SK-N-SH (cell line): ENCODE measurements at regions of chr15 and their contacts with region 1.

Region 1: GRCh38 chr15:37793851-37794250 is 140.6 kb upstream of the TMCO5A start:
- DNase-seq: peak; percentile 60
- H3K4me3 ChIP-seq: no peak overlapping the region
- H3K27ac ChIP-seq: peak overlapping the region in 1 of 2 experiments; percentile 99; a peak in 2 of 4 replicates
- H3K4me1 ChIP-seq: peaks cover 15 to 32% of the 10 kb centered on the region in 2 experiments; a peak in 2 of 4 replicates
- H3K27me3 ChIP-seq: no peaks in the 10 kb centered on the region
- CTCF ChIP-seq: peak; percentile 64
- EP300 ChIP-seq: no peak; a peak in 1 of 4 replicates
- RAD21 ChIP-seq: peak; percentile 93

Region 2: GRCh38 chr15:37100109-37100965 is 693.5 kb before region 1 on chr15 and contains the start of gene MEIS2:
- CTCF ChIA-PET with region 1: interaction called, 3 read pairs
- POLR2A ChIA-PET with region 1: interaction called, 11 read pairs
- DNase-seq: peak; percentile 97
- H3K4me3 ChIP-seq: peak within 1 kb of the TSS; percentile 74 to 92
- H3K27ac ChIP-seq: peak within 1 kb of the TSS; percentile 99
- H3K4me1 ChIP-seq: no peaks in the 10 kb centered on the region
- H3K27me3 ChIP-seq: no peaks in the 10 kb centered on the region
- CTCF ChIP-seq: no peak
- EP300 ChIP-seq: peak in 1 of 2 experiments; percentile 46; a peak in 2 of 4 replicates
- RAD21 ChIP-seq: no peak
- polyA plus RNA-seq, gene MEIS2: 120 and 146 TPM in 2 replicates

Region 3: DNA sequence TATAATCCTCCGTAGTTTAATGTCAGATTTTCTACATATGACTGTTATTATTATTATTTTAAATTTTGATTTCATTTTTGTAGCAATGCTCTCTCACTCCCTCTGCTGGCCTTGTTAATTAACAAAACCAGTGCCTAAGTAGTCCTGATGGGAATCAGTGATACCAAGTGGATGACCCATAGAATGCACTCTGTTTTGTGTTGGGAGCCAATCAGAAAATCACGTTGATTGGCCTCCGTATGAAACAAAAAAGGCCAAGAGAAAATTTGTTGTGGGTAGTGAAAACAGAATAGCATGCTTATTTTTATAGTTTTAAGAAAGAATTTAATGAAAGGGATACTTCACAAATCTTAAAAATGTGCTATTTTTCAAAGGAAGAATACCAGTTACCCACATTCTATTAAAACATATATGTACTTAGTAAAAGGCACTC is 659.1 kb before region 1 on chr15:
- CTCF ChIA-PET with region 1: interaction called, 37 read pairs
- POLR2A ChIA-PET with region 1: no interaction called
- DNase-seq: no peak
- H3K4me3 ChIP-seq: no peak overlapping the region
- H3K27ac ChIP-seq: peak overlapping the region in 1 of 2 experiments; percentile 97; a peak in 2 of 4 replicates
- H3K4me1 ChIP-seq: peaks cover 5 to 44% of the 10 kb centered on the region in 2 experiments; a peak in 2 of 4 replicates
- H3K27me3 ChIP-seq: no peaks in the 10 kb centered on the region
- CTCF ChIP-seq: peak; percentile 83
- EP300 ChIP-seq: 0 out of 4 replicates have a peak, but pooled peaks of 1 of the 2 experiments have one; percentile 26
- RAD21 ChIP-seq: peak; percentile 57; the same call in 1 of the 2 replicates

Region 4: DNA sequence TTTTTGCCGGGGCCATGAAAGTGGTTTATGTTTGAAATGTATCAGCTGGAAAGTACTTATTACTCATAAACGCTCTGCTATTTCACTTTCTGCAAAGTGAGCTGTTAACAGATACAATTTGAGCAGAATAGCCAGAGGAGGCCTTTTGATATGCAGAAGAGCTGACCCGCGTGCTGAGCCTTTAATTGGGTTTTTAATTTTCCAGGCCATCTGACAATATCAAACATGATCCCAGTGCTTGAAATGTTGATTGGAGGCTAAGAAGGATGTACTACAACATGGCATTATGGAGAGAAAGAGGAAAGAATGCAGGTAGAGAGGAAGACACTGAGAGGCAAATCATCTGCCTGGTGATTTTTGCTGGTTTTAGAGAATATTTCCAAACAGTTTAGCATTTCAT is 432.2 kb before region 1 on chr15:
- CTCF ChIA-PET with region 1: interaction called, 12 read pairs
- POLR2A ChIA-PET with region 1: interaction called, 5 read pairs
- DNase-seq: peak; percentile 21
- H3K4me3 ChIP-seq: no peak overlapping the region
- H3K27ac ChIP-seq: peak overlapping the region in 1 of 2 experiments; percentile 98; a peak in 2 of 4 replicates
- H3K4me1 ChIP-seq: peaks cover 0 to 21% of the 10 kb centered on the region in 2 experiments; a peak in 2 of 4 replicates
- H3K27me3 ChIP-seq: no peaks in the 10 kb centered on the region
- CTCF ChIP-seq: no peak
- EP300 ChIP-seq: peak in 1 of 2 experiments; percentile 90; a peak in 2 of 4 replicates
- RAD21 ChIP-seq: peak; percentile 48; the same call in 1 of the 2 replicates

Region 5: DNA sequence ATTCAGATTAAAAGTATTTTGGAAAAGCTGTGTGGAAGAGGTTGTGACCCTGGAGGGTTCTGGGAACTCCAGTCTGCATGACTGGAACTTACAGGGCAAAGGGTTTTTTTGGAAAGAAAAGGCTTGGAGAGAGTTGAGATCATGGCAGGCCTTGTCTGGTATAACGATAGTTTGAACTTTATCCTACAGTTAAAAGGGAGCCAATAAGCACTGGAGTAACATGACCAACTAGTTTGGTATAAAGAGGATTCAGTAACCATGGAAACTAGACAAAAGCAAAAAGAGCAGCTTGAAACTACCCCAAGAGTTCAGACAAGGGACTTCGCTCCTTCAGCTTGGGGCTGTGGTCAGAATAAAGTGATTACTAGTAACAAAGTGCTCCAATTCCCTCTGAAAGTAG is 10.6 kb before region 1 on chr15:
- CTCF ChIA-PET with region 1: interaction called, 15 read pairs
- POLR2A ChIA-PET with region 1: no interaction called
- DNase-seq: no peak
- H3K4me3 ChIP-seq: no peak overlapping the region
- H3K27ac ChIP-seq: no peak overlapping the region
- H3K4me1 ChIP-seq: no peaks in the 10 kb centered on the region; a peak in 1 of 4 replicates
- H3K27me3 ChIP-seq: no peaks in the 10 kb centered on the region
- CTCF ChIP-seq: no peak
- EP300 ChIP-seq: no peak
- RAD21 ChIP-seq: no peak

Region 6: GRCh38 chr15:37837276-37837675 is 43.4 kb after region 1 on chr15:
- CTCF ChIA-PET with region 1: no interaction called
- POLR2A ChIA-PET with region 1: no interaction called
- DNase-seq: no peak
- H3K4me3 ChIP-seq: no peak overlapping the region
- H3K27ac ChIP-seq: no peak overlapping the region
- H3K4me1 ChIP-seq: no peaks in the 10 kb centered on the region; a peak in 2 of 4 replicates
- H3K27me3 ChIP-seq: no peaks in the 10 kb centered on the region
- CTCF ChIP-seq: no peak
- EP300 ChIP-seq: no peak
- RAD21 ChIP-seq: no peak

Region 7: DNA sequence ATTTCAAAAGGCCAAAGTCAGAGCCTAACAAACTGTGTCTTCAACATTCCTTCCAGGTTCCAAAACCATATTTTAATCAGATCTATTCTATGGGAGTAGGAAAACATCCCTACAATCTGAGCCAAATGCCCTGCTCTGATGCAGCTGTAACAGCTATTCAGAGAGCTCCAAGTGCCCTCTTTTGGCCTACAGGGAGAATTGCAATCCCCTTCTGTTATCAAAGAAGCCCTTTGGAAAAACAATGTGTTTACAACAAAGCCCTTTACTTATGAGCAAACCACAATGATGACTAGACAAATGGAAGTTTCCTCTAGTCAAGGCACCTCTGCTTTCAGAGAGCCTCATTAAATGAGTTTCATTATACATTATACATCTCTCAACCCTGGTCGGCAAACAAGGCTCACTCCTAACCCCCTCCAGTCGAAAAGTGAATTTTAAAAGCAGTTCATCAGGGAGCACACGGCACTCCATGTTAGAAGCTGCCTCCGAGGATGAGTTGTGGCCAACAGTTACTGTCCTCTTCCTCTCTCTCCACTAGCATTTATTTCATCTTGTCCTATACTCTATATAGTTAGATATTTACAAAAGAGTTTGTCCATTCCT is 98.0 kb after region 1 on chr15:
- CTCF ChIA-PET with region 1: interaction called, 14 read pairs
- POLR2A ChIA-PET with region 1: no interaction called
- DNase-seq: peak; percentile 40
- H3K4me3 ChIP-seq: no peak overlapping the region; a peak in 1 of 4 replicates
- H3K27ac ChIP-seq: peak overlapping the region in 1 of 2 experiments; percentile 34; a peak in 2 of 4 replicates
- H3K4me1 ChIP-seq: peaks cover 0 to 2% of the 10 kb centered on the region in 2 experiments; a peak in 2 of 4 replicates
- H3K27me3 ChIP-seq: no peaks in the 10 kb centered on the region
- CTCF ChIP-seq: peak; percentile 92
- EP300 ChIP-seq: no peak
- RAD21 ChIP-seq: peak; percentile 98